ENCODE measurements at regions of chr18 and their contacts with region 1.

Region 1: GRCh38 chr18:44679056-44679905 is 1.4 kb upstream of the SETBP1 start:
- DNase-seq: peak; percentile 92
- ATAC-seq: peak; percentile 79
- H3K4me3 ChIP-seq: peak overlapping the region in 4 of 5 experiments; percentile 64 to 88 (median 80)
- H3K4me3 Mint-ChIP-seq: peak overlapping the region; percentile 87
- H3K27ac ChIP-seq: peak overlapping the region; percentile 79 to 82
- H3K27ac Mint-ChIP-seq: peak overlapping the region; percentile 89
- H3K4me1 ChIP-seq: peaks cover 29 to 36% of the 10 kb centered on the region in 2 donors
- H3K4me1 Mint-ChIP-seq: peaks cover 7% of the 10 kb centered on the region
- H3K27me3 ChIP-seq: no peaks in the 10 kb centered on the region
- H3K27me3 Mint-ChIP-seq: no peaks in the 10 kb centered on the region
- CTCF ChIP-seq: peak; percentile 81

Region 2: DNA sequence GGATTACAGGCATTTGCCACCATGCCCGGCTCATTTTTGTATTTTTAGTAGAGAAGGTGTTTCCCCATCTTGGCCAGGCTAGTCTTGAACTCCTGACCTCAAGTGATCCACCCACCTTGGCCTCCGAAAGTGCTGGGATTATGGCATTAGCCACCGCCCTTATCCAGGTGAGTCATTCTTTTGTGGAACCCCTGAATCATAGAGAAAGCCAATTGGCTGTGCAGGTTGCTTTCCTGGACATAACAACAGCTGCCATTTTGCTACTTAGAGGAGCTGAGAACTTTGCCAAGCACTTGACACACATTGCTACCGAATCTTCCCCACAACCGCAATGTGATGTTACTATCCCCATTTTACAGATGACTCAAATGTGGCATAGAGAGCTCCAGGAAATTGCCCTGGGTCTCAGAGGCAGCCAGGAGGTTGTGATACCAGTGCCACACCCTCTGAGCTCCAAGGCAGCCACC is 37.4 kb after region 1 on chr18:
- CTCF ChIA-PET with region 1: interaction called, 17 read pairs
- POLR2A ChIA-PET with region 1: interaction called, 10 read pairs
- intact Hi-C with region 1: no loop called
- DNase-seq: no peak
- ATAC-seq: no peak
- H3K4me3 ChIP-seq: no peak overlapping the region
- H3K4me3 Mint-ChIP-seq: no peak overlapping the region
- H3K27ac ChIP-seq: no peak overlapping the region
- H3K27ac Mint-ChIP-seq: peak overlapping the region; percentile 66
- H3K4me1 ChIP-seq: peaks cover 45 to 48% of the 10 kb centered on the region in 2 donors
- H3K4me1 Mint-ChIP-seq: peaks cover 84% of the 10 kb centered on the region
- H3K27me3 ChIP-seq: no peaks in the 10 kb centered on the region
- H3K27me3 Mint-ChIP-seq: no peaks in the 10 kb centered on the region
- CTCF ChIP-seq: no peak

Region 3: GRCh38 chr18:44799907-44800421 is 120.7 kb after region 1 on chr18:
- CTCF ChIA-PET with region 1: interaction called, 3 read pairs
- POLR2A ChIA-PET with region 1: interaction called, 4 read pairs
- intact Hi-C with region 1: loop called (anchors 5 kb)
- DNase-seq: peak; percentile 61
- ATAC-seq: peak; percentile 40
- H3K4me3 ChIP-seq: peak overlapping the region in 1 of 5 experiments; percentile 1
- H3K4me3 Mint-ChIP-seq: peak overlapping the region; percentile 65
- H3K27ac ChIP-seq: peak overlapping the region; percentile 72 to 83
- H3K27ac Mint-ChIP-seq: peak overlapping the region; percentile 91
- H3K4me1 ChIP-seq: peaks cover 44% of the 10 kb centered on the region in 2 donors
- H3K4me1 Mint-ChIP-seq: peaks cover 85% of the 10 kb centered on the region
- H3K27me3 ChIP-seq: no peaks in the 10 kb centered on the region
- H3K27me3 Mint-ChIP-seq: no peaks in the 10 kb centered on the region
- CTCF ChIP-seq: no peak

Region 4: DNA sequence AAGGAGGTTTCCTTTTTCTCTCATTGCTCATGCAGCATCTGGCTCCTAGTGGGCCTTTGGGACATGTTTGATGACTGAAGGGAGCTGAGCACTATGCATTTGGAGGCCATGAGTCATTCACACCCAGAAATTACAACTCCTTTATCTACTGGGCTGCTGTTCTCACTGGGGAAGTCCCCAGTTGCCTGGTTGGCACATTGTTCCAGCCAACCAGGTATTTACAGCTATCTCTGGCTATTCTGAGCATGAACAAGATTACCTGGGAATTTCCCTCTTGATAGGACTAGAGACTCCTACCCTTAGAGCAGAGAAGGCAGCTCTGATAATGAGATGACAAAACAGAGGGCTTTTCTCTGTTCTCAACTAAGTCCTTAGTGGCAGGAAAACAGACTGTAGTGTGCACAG is 207.9 kb after region 1 on chr18:
- CTCF ChIA-PET with region 1: interaction called, 5 read pairs
- POLR2A ChIA-PET with region 1: no interaction called
- intact Hi-C with region 1: loop called (anchors 1 kb)
- DNase-seq: peak; percentile 49
- ATAC-seq: peak; percentile 91
- H3K4me3 ChIP-seq: no peak overlapping the region
- H3K4me3 Mint-ChIP-seq: peak overlapping the region; percentile 42
- H3K27ac ChIP-seq: peak overlapping the region; percentile 52 to 77
- H3K27ac Mint-ChIP-seq: peak overlapping the region; percentile 92
- H3K4me1 ChIP-seq: peaks cover 35 to 37% of the 10 kb centered on the region in 2 donors
- H3K4me1 Mint-ChIP-seq: peaks cover 49% of the 10 kb centered on the region
- H3K27me3 ChIP-seq: no peaks in the 10 kb centered on the region
- H3K27me3 Mint-ChIP-seq: no peaks in the 10 kb centered on the region
- CTCF ChIP-seq: no peak

Region 5: GRCh38 chr18:45106331-45106774 is 427.1 kb after region 1 on chr18:
- CTCF ChIA-PET with region 1: interaction called, 6 read pairs
- POLR2A ChIA-PET with region 1: interaction called, 4 read pairs
- intact Hi-C with region 1: loop called (anchors 2 kb)
- DNase-seq: peak; percentile 80
- ATAC-seq: peak; percentile 56
- H3K4me3 ChIP-seq: peak overlapping the region in 2 of 5 experiments; percentile 8 to 30
- H3K4me3 Mint-ChIP-seq: peak overlapping the region; percentile 59
- H3K27ac ChIP-seq: peak overlapping the region; percentile 89 to 93
- H3K27ac Mint-ChIP-seq: peak overlapping the region; percentile 83
- H3K4me1 ChIP-seq: peaks cover 67 to 68% of the 10 kb centered on the region in 2 donors
- H3K4me1 Mint-ChIP-seq: peaks cover 53% of the 10 kb centered on the region
- H3K27me3 ChIP-seq: no peaks in the 10 kb centered on the region
- H3K27me3 Mint-ChIP-seq: no peaks in the 10 kb centered on the region
- CTCF ChIP-seq: no peak

Region 6: GRCh38 chr18:45330170-45330594 is 650.9 kb after region 1 on chr18:
- CTCF ChIA-PET with region 1: no interaction called
- POLR2A ChIA-PET with region 1: no interaction called
- intact Hi-C with region 1: no loop called
- DNase-seq: no peak
- ATAC-seq: no peak
- H3K4me3 ChIP-seq: no peak overlapping the region
- H3K4me3 Mint-ChIP-seq: no peak overlapping the region
- H3K27ac ChIP-seq: no peak overlapping the region
- H3K27ac Mint-ChIP-seq: no peak overlapping the region
- H3K4me1 ChIP-seq: no peaks in the 10 kb centered on the region
- H3K4me1 Mint-ChIP-seq: no peaks in the 10 kb centered on the region
- H3K27me3 ChIP-seq: peaks cover 0 to 3% (median 0%) of the 10 kb centered on the region in 4 experiments
- H3K27me3 Mint-ChIP-seq: peaks cover 29% of the 10 kb centered on the region
- CTCF ChIP-seq: no peak

Region 7: GRCh38 chr18:45384137-45384961 is 705.1 kb after region 1 on chr18:
- CTCF ChIA-PET with region 1: no interaction called
- POLR2A ChIA-PET with region 1: no interaction called
- intact Hi-C with region 1: loop called (anchors 10 kb)
- DNase-seq: peak; percentile 78
- ATAC-seq: peak; percentile 45
- H3K4me3 ChIP-seq: no peak overlapping the region
- H3K4me3 Mint-ChIP-seq: no peak overlapping the region
- H3K27ac ChIP-seq: no peak overlapping the region
- H3K27ac Mint-ChIP-seq: no peak overlapping the region
- H3K4me1 ChIP-seq: no peaks in the 10 kb centered on the region
- H3K4me1 Mint-ChIP-seq: peaks cover 4% of the 10 kb centered on the region
- H3K27me3 ChIP-seq: peaks cover 0 to 8% (median 3%) of the 10 kb centered on the region in 4 experiments
- H3K27me3 Mint-ChIP-seq: peaks cover 23% of the 10 kb centered on the region
- CTCF ChIP-seq: peak; percentile 85